AG04449 (cell line): ENCODE measurements at regions of chr9 and their contacts with region 1.

Region 1: GRCh38 chr9:35079426-35080341 is at the start of gene FANCG:
- DNase-seq: peak; percentile 57
- H3K4me3 ChIP-seq: peak within 1 kb of the TSS; percentile 89
- CTCF ChIP-seq: no peak

Region 2: GRCh38 chr9:35102926-35103659 is 23.4 kb after region 1 on chr9 and contains the start of gene STOML2:
- CTCF ChIA-PET with region 1: interaction called, 127 read pairs
- POLR2A ChIA-PET with region 1: interaction called, 10 read pairs
- DNase-seq: peak; percentile 73
- H3K4me3 ChIP-seq: peak within 1 kb of the TSS; percentile 65
- CTCF ChIP-seq: no peak